HCT116 (cell line): ENCODE measurements at regions of chrX and their contacts with region 1.

Region 1: DNA sequence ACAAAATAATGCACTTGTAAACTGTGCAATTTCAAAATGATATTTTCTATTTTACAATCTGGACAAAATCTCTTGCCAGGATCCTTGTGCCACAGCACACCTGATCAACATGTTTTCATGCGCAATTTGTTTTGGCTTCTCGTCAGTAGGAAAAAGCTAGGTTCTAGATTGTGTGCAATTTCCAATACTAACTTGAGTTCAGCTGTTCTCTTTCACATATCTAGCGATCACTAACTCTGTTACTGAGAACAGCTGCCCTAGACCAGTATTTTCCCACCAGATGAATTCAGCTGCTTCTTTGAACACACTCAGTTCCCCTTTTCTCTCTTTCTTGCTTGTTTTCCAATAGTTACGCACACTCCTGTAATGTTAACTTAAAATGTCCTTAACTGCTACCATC is 131.2 kb downstream of the MAGEB5 start:
- DNase-seq: no peak
- ATAC-seq: no peak
- H3K4me3 ChIP-seq: no peak overlapping the region
- H3K27ac ChIP-seq: no peak overlapping the region
- H3K4me1 ChIP-seq: no peaks in the 10 kb centered on the region
- H3K27me3 ChIP-seq: no peaks in the 10 kb centered on the region
- CTCF ChIP-seq: no peak
- POLR2A ChIP-seq: no peak
- RAD21 ChIP-seq: no peak

Region 2: DNA sequence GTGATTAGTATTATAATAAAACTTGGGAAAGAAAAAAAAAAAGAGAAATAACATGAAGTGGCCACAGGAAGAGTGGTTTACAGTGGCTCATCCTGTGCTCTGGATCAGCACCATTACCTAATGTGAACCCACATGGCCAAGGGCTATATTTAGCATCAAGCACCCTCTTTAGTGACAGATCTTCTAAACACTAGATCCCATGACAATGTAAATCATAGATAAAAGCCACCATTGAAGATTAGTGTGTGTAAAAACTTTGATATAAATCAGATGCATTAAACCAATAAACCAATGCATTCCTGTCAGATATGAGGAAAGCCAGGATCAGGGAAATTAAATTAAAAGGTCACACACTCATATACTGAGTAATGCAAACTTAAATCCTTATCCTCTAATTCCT is 609.6 kb before region 1 on chrX:
- CTCF ChIA-PET with region 1: no interaction called
- POLR2A ChIA-PET with region 1: no interaction called
- RAD21 ChIA-PET with region 1: no interaction called
- intact Hi-C with region 1: no loop called
- DNase-seq: no peak
- ATAC-seq: no peak
- H3K4me3 ChIP-seq: no peak overlapping the region
- H3K27ac ChIP-seq: no peak overlapping the region
- H3K4me1 ChIP-seq: no peaks in the 10 kb centered on the region
- H3K27me3 ChIP-seq: no peaks in the 10 kb centered on the region
- CTCF ChIP-seq: no peak
- POLR2A ChIP-seq: no peak
- RAD21 ChIP-seq: no peak

Region 3: DNA sequence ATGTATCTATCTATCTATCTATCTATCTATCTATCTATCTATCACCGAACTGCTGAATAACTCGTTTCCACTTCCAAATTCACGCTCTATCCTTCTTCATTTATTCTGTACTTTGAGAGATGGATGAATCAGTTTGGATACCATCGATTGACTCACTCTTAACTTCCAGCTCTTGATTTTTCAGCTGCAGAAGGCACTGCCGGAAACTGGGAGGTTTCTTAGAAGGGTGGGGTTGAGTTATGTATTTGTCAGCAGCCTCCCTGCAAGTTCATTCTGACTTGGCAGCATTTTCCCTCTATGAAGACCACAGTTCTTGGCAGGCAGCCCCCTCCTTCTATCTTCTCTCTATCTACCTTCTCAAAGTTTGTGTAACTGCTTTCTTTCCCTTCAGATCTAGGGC is 321.0 kb before region 1 on chrX:
- CTCF ChIA-PET with region 1: no interaction called
- POLR2A ChIA-PET with region 1: no interaction called
- RAD21 ChIA-PET with region 1: no interaction called
- intact Hi-C with region 1: no loop called
- DNase-seq: no peak
- ATAC-seq: no peak
- H3K4me3 ChIP-seq: no peak overlapping the region
- H3K27ac ChIP-seq: no peak overlapping the region
- H3K4me1 ChIP-seq: no peaks in the 10 kb centered on the region
- H3K27me3 ChIP-seq: no peaks in the 10 kb centered on the region
- CTCF ChIP-seq: no peak
- POLR2A ChIP-seq: no peak
- RAD21 ChIP-seq: no peak

Region 4: DNA sequence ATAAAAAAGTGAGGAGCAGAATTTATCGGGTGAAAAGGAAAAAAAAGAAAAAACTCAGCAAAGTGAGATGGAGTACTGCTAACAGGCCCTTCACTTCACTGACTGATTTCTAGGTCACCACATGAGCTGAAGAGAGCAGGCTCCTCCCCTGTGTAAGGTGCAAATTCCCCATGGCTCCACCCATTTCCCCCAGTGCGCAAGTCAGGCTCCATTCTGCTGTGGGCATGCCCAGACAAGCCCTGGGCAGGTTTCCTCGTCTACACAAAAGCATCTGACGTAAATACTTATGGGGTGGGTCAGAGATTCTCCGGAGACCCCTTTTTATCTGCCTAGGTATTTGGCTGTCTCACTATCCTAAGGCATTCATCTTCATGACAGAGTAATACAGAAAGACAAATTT is 26.7 kb after region 1 on chrX:
- CTCF ChIA-PET with region 1: no interaction called
- POLR2A ChIA-PET with region 1: no interaction called
- RAD21 ChIA-PET with region 1: no interaction called
- intact Hi-C with region 1: no loop called
- DNase-seq: no peak
- ATAC-seq: no peak
- H3K4me3 ChIP-seq: no peak overlapping the region
- H3K27ac ChIP-seq: no peak overlapping the region
- H3K4me1 ChIP-seq: no peaks in the 10 kb centered on the region
- H3K27me3 ChIP-seq: no peaks in the 10 kb centered on the region
- CTCF ChIP-seq: no peak
- POLR2A ChIP-seq: no peak
- RAD21 ChIP-seq: no peak

Region 5: DNA sequence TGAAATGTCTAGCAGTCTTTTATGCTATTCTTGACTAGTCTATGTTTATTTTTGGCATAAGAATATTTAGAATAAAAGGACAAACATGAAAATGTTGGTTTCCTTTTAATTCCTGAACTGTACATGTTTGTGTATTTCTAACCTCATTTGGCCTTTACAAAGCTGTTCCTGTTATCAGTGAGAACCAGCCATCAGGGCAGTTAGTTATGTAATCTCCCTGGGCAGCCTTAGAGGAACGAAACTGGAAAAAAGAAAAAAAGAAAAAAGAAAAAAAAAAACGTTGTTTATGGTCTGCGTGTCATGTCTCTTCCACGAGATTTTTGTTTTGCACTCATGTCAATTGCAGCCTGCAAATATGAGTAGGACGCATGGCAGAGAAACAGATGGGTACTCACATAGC is 62.5 kb after region 1 on chrX:
- CTCF ChIA-PET with region 1: no interaction called
- POLR2A ChIA-PET with region 1: no interaction called
- RAD21 ChIA-PET with region 1: no interaction called
- intact Hi-C with region 1: loop called (anchors 10 kb)
- DNase-seq: no peak
- ATAC-seq: no peak
- H3K4me3 ChIP-seq: no peak overlapping the region
- H3K27ac ChIP-seq: no peak overlapping the region
- H3K4me1 ChIP-seq: no peaks in the 10 kb centered on the region
- H3K27me3 ChIP-seq: no peaks in the 10 kb centered on the region
- CTCF ChIP-seq: no peak
- POLR2A ChIP-seq: no peak
- RAD21 ChIP-seq: no peak